ENCODE measurements at regions of chr20 and their contacts with region 1.

Region 1: GRCh38 chr20:46089417-46090388 is at the start of gene NCOA5:
- DNase-seq: peak; percentile 93
- H3K4me3 Mint-ChIP-seq: peak within 1 kb of the TSS; percentile 84
- H3K27ac Mint-ChIP-seq: peak within 1 kb of the TSS; percentile 85
- H3K4me1 Mint-ChIP-seq: peaks cover 28% of the 10 kb centered on the region
- H3K27me3 Mint-ChIP-seq: no peaks in the 10 kb centered on the region
- CTCF ChIP-seq: no peak
- total RNA-seq, gene NCOA5: 26.0 and 31.2 TPM in 2 replicates

Region 2: GRCh38 chr20:45576995-45577394 is 512.7 kb before region 1 on chr20:
- CTCF ChIA-PET with region 1: no interaction called
- POLR2A ChIA-PET with region 1: no interaction called
- intact Hi-C with region 1: no loop called
- DNase-seq: no peak
- H3K4me3 Mint-ChIP-seq: no peak overlapping the region
- H3K27ac Mint-ChIP-seq: no peak overlapping the region
- H3K4me1 Mint-ChIP-seq: no peaks in the 10 kb centered on the region
- H3K27me3 Mint-ChIP-seq: peaks cover 29% of the 10 kb centered on the region
- CTCF ChIP-seq: no peak

Region 3: DNA sequence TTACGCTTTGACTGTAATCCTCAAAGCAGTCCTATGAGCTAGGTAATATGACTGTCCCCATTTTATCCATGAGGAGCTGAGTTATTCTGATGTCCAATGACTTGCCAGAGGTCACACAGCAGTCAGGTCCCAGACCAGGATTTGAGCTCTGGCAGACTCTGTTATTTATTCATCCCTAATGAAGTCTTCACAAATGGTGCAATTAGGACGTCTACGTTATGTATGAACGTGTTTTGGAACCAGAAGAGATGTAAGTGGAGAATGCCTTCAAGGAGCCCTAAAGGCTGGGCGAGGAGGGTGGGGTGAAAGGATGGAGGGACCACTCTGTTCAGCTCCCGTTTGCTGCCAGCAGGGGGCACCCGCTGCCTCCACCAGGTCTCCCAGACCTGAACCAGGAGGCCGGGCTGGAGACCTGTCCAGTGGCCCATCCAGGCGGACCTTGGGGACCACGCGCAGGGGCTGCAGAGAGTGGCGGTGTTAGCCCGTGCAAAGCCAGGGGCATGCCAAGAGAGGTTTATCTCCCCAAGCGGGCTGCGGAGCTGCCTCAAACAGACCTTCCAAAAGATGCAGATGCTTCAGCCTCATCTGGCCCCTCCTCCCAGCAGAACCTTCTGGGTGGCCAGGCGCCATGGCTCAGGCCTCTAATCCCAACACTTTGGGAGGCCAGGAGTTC is 102.5 kb before region 1 on chr20:
- CTCF ChIA-PET with region 1: interaction called, 64 read pairs
- POLR2A ChIA-PET with region 1: interaction called, 16 read pairs
- intact Hi-C with region 1: loop called (anchors 5 kb)
- DNase-seq: peak; percentile 73
- H3K4me3 Mint-ChIP-seq: no peak overlapping the region
- H3K27ac Mint-ChIP-seq: no peak overlapping the region
- H3K4me1 Mint-ChIP-seq: no peaks in the 10 kb centered on the region
- H3K27me3 Mint-ChIP-seq: no peaks in the 10 kb centered on the region
- CTCF ChIP-seq: peak; percentile 88

Region 4: GRCh38 chr20:45993197-45993951 is 96.3 kb before region 1 on chr20:
- CTCF ChIA-PET with region 1: interaction called, 64 read pairs
- POLR2A ChIA-PET with region 1: interaction called, 13 read pairs
- intact Hi-C with region 1: loop called (anchors 5 kb)
- DNase-seq: peak; percentile 97
- H3K4me3 Mint-ChIP-seq: peak overlapping the region; percentile 33
- H3K27ac Mint-ChIP-seq: peak overlapping the region; percentile 57
- H3K4me1 Mint-ChIP-seq: peaks cover 25% of the 10 kb centered on the region
- H3K27me3 Mint-ChIP-seq: no peaks in the 10 kb centered on the region
- CTCF ChIP-seq: no peak

Region 5: GRCh38 chr20:46022411-46023147 is 67.1 kb before region 1 on chr20:
- CTCF ChIA-PET with region 1: interaction called, 8 read pairs
- POLR2A ChIA-PET with region 1: interaction called, 4 read pairs
- intact Hi-C with region 1: loop called (anchors 2 kb)
- DNase-seq: peak; percentile 59
- H3K4me3 Mint-ChIP-seq: peak overlapping the region; percentile 29
- H3K27ac Mint-ChIP-seq: no peak overlapping the region
- H3K4me1 Mint-ChIP-seq: peaks cover 12% of the 10 kb centered on the region
- H3K27me3 Mint-ChIP-seq: peaks cover 60% of the 10 kb centered on the region
- CTCF ChIP-seq: peak; percentile 84

Region 6: GRCh38 chr20:46078954-46079353 is 10.7 kb before region 1 on chr20:
- CTCF ChIA-PET with region 1: interaction called, 8 read pairs
- POLR2A ChIA-PET with region 1: interaction called, 25 read pairs
- intact Hi-C with region 1: no loop called
- DNase-seq: no peak
- H3K4me3 Mint-ChIP-seq: no peak overlapping the region
- H3K27ac Mint-ChIP-seq: no peak overlapping the region
- H3K4me1 Mint-ChIP-seq: peaks cover 6% of the 10 kb centered on the region
- H3K27me3 Mint-ChIP-seq: no peaks in the 10 kb centered on the region
- CTCF ChIP-seq: no peak

Region 7: GRCh38 chr20:46363800-46364634 is 274.3 kb after region 1 on chr20:
- CTCF ChIA-PET with region 1: no interaction called
- POLR2A ChIA-PET with region 1: interaction called, 10 read pairs
- intact Hi-C with region 1: no loop called
- DNase-seq: peak; percentile 83
- H3K4me3 Mint-ChIP-seq: peak overlapping the region; percentile 91
- H3K27ac Mint-ChIP-seq: peak overlapping the region; percentile 92
- H3K4me1 Mint-ChIP-seq: peaks cover 29% of the 10 kb centered on the region
- H3K27me3 Mint-ChIP-seq: no peaks in the 10 kb centered on the region
- CTCF ChIP-seq: no peak

Measured in MCF 10A (cell line).